ENCODE measurements at regions of chr2 and their contacts with region 1.

Region 1: GRCh38 chr2:42663106-42663780 is 94.8 kb downstream of the MTA3 start:
- DNase-seq: peak; percentile 83 to 89 (median 88)
- H3K4me3 ChIP-seq: peak overlapping the region in 1 of 7 experiments; percentile 43
- H3K27ac ChIP-seq: peak overlapping the region in 1 of 2 experiments; percentile 70
- H3K4me1 ChIP-seq: peaks cover 9 to 31% (median 21%) of the 10 kb centered on the region in 4 experiments
- H3K27me3 ChIP-seq: peaks cover 0 to 10% (median 0%) of the 10 kb centered on the region in 5 experiments

Region 2: GRCh38 chr2:42673989-42674579 is 10.8 kb after region 1 on chr2:
- CTCF ChIA-PET with region 1: interaction called, 12 read pairs
- POLR2A ChIA-PET with region 1: no interaction called
- DNase-seq: no peak
- H3K4me3 ChIP-seq: no peak overlapping the region
- H3K27ac ChIP-seq: no peak overlapping the region
- H3K4me1 ChIP-seq: no peaks in the 10 kb centered on the region
- H3K27me3 ChIP-seq: no peaks in the 10 kb centered on the region

Region 3: GRCh38 chr2:42754021-42754775 is 91.0 kb after region 1 on chr2:
- CTCF ChIA-PET with region 1: interaction called, 12 read pairs
- POLR2A ChIA-PET with region 1: interaction called, 5 read pairs
- DNase-seq: peak in 2 of 3 donors; percentile 60 to 74
- H3K4me3 ChIP-seq: no peak overlapping the region
- H3K27ac ChIP-seq: no peak overlapping the region
- H3K4me1 ChIP-seq: peaks cover 27 to 70% (median 56%) of the 10 kb centered on the region in 4 experiments
- H3K27me3 ChIP-seq: no peaks in the 10 kb centered on the region

Measured in common myeloid progenitor, CD34-positive (primary cell).